OCI-LY7 (cell line): ENCODE measurements at regions of chr6 and their contacts with region 1.

Region 1: GRCh38 chr6:107489636-107490565 is at the start of gene SOBP:
- DNase-seq: peak; percentile 91
- H3K4me3 ChIP-seq: peak within 1 kb of the TSS; percentile 95
- H3K27ac ChIP-seq: peak within 1 kb of the TSS; percentile 68
- H3K4me1 ChIP-seq: peaks cover 46% of the 10 kb centered on the region
- CTCF ChIP-seq: peak; percentile 60
- total RNA-seq, gene SOBP: 16.0 and 21.5 TPM in 2 replicates

Region 2: DNA sequence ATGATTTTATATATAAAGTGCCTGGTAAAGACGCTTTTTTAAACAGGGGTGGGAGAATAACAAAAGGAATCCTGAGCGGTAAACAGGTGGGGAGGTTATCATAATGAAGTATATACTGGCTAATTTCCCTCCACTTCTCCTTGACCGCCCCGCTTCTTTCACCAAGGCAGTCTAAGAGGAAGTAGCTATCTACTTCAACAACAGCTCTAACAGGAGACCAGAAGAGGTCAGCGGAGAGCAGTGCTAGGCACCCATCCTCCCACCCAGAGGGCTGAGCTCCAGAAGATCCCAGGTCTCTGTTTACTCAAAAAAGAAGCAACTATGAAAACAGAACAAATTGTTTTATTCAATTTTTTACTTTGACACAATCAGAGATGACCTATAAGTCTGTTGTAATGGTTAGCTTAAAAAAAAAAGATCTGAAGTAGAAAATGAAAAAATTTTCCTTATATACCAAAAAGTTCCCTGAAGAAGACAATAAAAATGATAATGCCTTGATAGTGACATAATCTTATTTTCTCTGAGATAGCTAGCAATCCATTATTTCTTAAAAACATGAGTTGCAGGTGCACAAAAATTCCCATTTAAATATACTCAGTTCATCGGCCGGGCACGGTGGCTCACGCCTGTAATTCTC is 171.7 kb before region 1 on chr6:
- CTCF ChIA-PET with region 1: no interaction called
- POLR2A ChIA-PET with region 1: interaction called, 5 read pairs
- intact Hi-C with region 1: loop called (anchors 2 kb)
- DNase-seq: peak; percentile 80
- H3K4me3 ChIP-seq: no peak overlapping the region
- H3K27ac ChIP-seq: no peak overlapping the region
- H3K4me1 ChIP-seq: peaks cover 33% of the 10 kb centered on the region
- CTCF ChIP-seq: peak; percentile 98

Region 3: DNA sequence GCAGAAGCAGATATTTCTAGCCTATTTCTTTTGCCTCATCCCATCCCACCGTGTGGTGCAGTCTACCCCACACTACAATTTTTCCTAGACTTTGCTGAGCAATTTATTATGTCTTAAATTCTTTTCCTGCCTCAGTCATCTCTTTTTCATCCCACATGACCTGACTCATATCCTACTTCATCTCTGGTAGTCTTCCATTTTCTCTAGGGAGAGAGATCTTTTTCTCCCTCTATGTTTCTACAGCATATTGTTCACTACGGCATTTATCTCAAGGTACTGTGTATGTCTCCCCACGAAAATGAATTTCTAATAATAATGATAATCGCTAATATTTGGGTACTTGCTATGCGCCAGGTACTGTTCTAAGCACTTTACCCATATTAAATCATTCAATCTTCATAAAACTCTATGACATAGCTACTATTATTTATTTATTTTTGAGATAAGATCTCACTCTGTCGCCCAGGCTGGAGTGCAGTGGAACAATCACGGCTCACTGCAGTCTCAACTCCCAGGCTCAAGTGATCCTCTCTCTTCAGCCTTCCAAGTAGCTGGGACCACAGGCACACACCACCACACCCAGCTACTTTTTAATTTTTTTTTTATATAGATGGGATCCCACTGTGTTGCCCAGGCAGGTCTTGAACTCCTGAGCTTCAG is 46.2 kb before region 1 on chr6:
- CTCF ChIA-PET with region 1: no interaction called
- POLR2A ChIA-PET with region 1: no interaction called
- intact Hi-C with region 1: no loop called
- DNase-seq: no peak
- H3K4me3 ChIP-seq: no peak overlapping the region
- H3K27ac ChIP-seq: no peak overlapping the region
- H3K4me1 ChIP-seq: no peaks in the 10 kb centered on the region
- CTCF ChIP-seq: no peak

Region 4: DNA sequence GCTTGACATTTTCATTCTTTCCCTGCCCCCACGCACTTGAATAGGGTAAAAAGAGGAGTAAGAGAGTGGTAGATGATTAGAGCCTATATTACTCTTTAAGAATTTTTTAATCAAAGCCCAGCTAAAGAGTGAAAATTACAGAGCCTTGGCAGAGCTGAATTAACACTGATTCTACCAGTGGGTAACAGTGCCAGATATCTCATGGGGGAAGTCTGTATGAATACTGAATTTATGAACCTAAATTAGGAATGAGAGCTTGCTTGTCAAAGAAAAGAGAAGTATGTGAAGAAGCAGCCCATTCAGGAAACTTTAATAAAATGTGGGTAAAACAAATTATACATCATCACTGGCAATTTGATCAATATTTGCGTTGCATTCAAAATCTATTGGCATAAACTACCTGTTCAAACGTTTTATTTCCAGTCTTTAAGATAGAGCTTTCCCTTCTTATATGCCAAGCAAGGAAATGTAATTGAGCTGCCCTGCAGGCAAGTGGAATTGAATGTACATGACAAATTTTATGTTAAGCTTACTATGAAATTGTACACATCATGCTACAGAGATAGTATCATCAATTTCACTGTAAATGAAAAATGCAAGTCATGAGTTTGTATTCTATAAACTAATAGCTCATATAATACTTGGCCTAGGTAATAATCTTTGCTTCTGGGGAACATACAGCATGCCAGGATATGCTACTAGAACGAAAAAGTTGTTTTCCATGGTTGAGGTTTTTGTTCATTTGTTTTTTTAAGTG is 14.5 kb after region 1 on chr6:
- CTCF ChIA-PET with region 1: interaction called, 3 read pairs
- POLR2A ChIA-PET with region 1: interaction called, 25 read pairs
- intact Hi-C with region 1: no loop called
- DNase-seq: no peak
- H3K4me3 ChIP-seq: no peak overlapping the region
- H3K27ac ChIP-seq: no peak overlapping the region
- H3K4me1 ChIP-seq: peaks cover 8% of the 10 kb centered on the region
- CTCF ChIP-seq: no peak

Region 5: DNA sequence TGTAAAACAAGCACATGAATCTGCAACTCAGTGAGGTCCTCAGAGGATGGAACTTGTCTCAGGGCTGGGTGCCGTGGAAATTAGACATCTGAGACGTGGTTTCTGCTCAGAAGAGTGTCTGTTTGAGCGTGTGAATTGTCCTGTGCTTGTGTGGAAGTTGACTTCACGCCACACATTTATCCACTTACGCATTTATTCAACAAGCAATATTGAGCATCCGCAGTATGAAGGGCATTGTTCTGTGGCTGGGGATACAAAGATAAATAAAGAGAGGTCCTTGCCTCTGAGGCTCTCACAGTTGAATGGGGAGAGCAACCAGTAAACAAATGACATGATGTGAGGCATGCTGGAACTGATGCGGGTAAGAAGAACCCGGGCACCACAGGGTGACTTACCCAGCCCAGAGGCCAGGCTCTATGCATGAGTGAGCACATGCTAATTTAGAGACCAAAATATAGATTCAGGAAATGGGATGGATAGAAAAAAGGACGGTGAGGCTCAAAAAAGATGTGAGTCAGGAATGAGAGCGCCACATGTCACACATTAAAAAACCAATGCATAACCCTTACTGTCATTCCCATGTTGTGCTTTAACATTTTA is 60.4 kb after region 1 on chr6:
- CTCF ChIA-PET with region 1: interaction called, 4 read pairs
- POLR2A ChIA-PET with region 1: interaction called, 7 read pairs
- intact Hi-C with region 1: loop called (anchors 5 kb)
- DNase-seq: peak; percentile 87
- H3K4me3 ChIP-seq: peak overlapping the region; percentile 49
- H3K27ac ChIP-seq: peak overlapping the region; percentile 91
- H3K4me1 ChIP-seq: peaks cover 35% of the 10 kb centered on the region
- CTCF ChIP-seq: no peak

Region 6: DNA sequence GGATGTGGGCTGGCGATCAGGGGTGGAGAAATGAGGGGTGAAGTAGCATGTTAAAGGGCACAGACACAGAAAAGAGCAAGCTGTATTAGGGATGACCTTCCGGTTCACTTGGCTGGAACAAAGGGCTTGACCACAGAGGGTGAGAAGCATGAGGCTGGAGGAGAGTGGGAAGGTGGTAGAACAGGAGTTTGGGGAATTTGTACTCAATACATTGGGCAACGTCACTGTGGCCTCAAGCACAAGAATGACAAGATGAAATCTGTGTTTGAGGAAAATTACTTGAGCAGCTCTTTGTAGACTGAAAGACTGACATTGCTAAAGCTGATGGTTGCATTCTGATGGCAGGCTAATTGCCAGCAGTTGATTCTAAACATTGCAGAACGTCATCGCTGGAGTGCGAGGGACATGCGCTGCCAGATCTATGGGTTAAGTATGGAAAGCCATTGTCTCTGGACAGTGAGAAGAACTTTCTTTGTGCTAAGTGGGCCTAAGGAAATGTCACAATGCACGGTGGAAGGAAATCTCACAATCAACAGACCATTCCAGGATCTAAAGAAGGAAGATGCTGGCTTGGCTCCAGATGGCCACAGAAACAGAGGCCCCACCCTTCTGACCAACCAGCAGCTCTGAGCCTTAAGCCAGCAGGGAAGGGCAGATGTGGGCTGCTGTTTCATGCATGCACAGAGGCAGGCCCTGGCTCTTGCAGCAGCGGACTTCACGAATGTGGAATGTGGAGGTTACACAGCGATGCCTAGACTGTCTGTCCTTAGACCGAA is 156.1 kb after region 1 on chr6:
- CTCF ChIA-PET with region 1: interaction called, 12 read pairs
- POLR2A ChIA-PET with region 1: interaction called, 25 read pairs
- intact Hi-C with region 1: no loop called
- DNase-seq: no peak
- H3K4me3 ChIP-seq: no peak overlapping the region
- H3K27ac ChIP-seq: no peak overlapping the region
- H3K4me1 ChIP-seq: peaks cover 77% of the 10 kb centered on the region
- CTCF ChIP-seq: no peak

Region 7: DNA sequence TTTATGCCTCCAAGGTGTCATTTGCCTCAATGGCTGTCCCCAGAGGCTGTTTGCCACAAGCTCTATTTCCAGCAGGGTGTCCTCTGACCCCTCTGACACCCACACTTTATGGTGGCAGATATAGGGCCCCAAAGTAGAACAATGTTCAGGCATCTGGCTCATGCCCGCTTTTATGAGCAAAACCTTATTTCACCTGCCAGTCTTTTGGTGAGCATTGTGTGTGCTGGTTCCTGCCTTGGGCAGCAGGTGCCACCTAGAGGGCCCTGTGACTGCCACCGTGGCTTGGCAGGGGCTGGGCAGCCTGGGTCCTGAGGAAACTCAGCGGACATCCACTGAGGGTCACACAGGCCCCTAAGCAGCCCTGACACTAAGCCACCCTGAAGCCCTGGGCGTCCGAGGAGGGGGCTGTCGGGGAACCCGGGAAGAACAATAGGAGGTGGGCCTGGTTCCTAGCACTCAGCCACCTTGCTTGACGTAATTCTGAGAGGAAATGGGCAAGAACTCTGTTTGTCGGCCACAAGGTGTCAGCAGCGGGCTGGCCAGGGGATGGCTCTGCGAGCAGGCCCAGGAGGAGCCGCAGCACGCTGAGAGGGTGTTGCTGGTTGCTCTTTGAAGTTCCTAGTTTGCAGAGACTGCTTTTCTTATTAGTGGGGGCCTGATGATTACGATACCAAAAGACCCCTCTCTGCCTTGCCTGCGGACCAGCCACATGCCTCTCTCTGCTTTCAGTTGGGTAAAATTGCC is 185.3 kb after region 1 on chr6:
- CTCF ChIA-PET with region 1: interaction called, 5 read pairs
- POLR2A ChIA-PET with region 1: no interaction called
- intact Hi-C with region 1: loop called (anchors 5 kb)
- DNase-seq: peak; percentile 89
- H3K4me3 ChIP-seq: peak overlapping the region; percentile 21
- H3K27ac ChIP-seq: no peak overlapping the region
- H3K4me1 ChIP-seq: peaks cover 25% of the 10 kb centered on the region
- CTCF ChIP-seq: peak; percentile 100